Aorta (tissue), 5 donors: ENCODE measurements at regions of chr10 and their contacts with region 1.

Region 1: GRCh38 chr10:103416436-103417147 is 20.2 kb downstream of the PDCD11 start:
- DNase-seq: peak in 1 of 2 donors; percentile 70
- ATAC-seq: peak; percentile 72
- H3K4me3 ChIP-seq: no peak overlapping the region
- H3K27ac ChIP-seq: no peak overlapping the region
- H3K4me1 ChIP-seq: no peaks in the 10 kb centered on the region
- H3K27me3 ChIP-seq: no peaks in the 10 kb centered on the region

Region 2: GRCh38 chr10:103481974-103482531 is 65.5 kb after region 1 on chr10:
- intact Hi-C with region 1: loop called (anchors 1 kb)
- DNase-seq: no peak
- ATAC-seq: peak; percentile 76
- H3K4me3 ChIP-seq: no peak overlapping the region
- H3K27ac ChIP-seq: no peak overlapping the region
- H3K4me1 ChIP-seq: no peaks in the 10 kb centered on the region
- H3K27me3 ChIP-seq: no peaks in the 10 kb centered on the region

Region 3: GRCh38 chr10:103534581-103535508 is 118.3 kb after region 1 on chr10:
- intact Hi-C with region 1: no loop called
- DNase-seq: no peak
- ATAC-seq: no peak
- H3K4me3 ChIP-seq: no peak overlapping the region
- H3K27ac ChIP-seq: no peak overlapping the region
- H3K4me1 ChIP-seq: no peaks in the 10 kb centered on the region
- H3K27me3 ChIP-seq: no peaks in the 10 kb centered on the region